GM10248 (cell line): ENCODE measurements at regions of chr1 and their contacts with region 1.

Region 1: DNA sequence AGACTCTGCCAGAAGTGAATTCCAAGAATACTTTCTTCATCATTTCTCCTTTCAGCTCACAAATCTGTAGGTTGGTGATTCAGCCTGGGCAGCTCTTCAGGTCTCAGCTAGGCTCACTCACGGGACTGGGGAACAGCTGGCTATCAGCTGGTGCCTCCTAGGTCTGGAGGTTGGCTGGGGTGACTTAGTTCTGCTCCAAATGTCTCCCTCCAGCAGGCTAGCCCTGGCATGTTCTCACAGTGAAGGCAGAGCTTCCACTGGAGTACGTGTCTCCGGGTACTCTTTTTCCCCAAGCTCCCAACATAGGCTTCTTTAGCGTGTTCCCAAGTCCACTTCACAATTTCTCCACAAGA is 12.5 kb upstream of the VAMP4 start:
- DNase-seq: no peak
- CTCF ChIP-seq: no peak

Region 2: GRCh38 chr1:171741872-171742576 is 12.3 kb before region 1 on chr1 and contains the start of gene VAMP4:
- CTCF ChIA-PET with region 1: interaction called, 18 read pairs
- POLR2A ChIA-PET with region 1: no interaction called
- DNase-seq: peak; percentile 89
- CTCF ChIP-seq: no peak

Region 3: GRCh38 chr1:171954361-171954760 is 200.0 kb after region 1 on chr1:
- CTCF ChIA-PET with region 1: no interaction called
- POLR2A ChIA-PET with region 1: no interaction called
- DNase-seq: no peak
- CTCF ChIP-seq: no peak

Region 4: GRCh38 chr1:172105223-172105622 is 350.9 kb after region 1 on chr1:
- CTCF ChIA-PET with region 1: no interaction called
- POLR2A ChIA-PET with region 1: no interaction called
- DNase-seq: no peak
- CTCF ChIP-seq: no peak